A673 (cell line): ENCODE measurements at regions of chr18 and their contacts with region 1.

Region 1: GRCh38 chr18:57881818-57882413 is 78.8 kb upstream of the ATP8B1 start:
- DNase-seq: peak; percentile 87
- H3K4me3 ChIP-seq: no peak overlapping the region
- H3K27ac ChIP-seq: no peak overlapping the region
- H3K4me1 ChIP-seq: no peaks in the 10 kb centered on the region
- H3K27me3 ChIP-seq: no peaks in the 10 kb centered on the region
- CTCF ChIP-seq: peak; percentile 95

Region 2: GRCh38 chr18:57705826-57706554 is 175.9 kb before region 1 on chr18:
- CTCF ChIA-PET with region 1: no interaction called
- POLR2A ChIA-PET with region 1: no interaction called
- intact Hi-C with region 1: no loop called
- DNase-seq: no peak
- H3K4me3 ChIP-seq: no peak overlapping the region
- H3K27ac ChIP-seq: no peak overlapping the region
- H3K4me1 ChIP-seq: peaks cover 10% of the 10 kb centered on the region
- H3K27me3 ChIP-seq: no peaks in the 10 kb centered on the region
- CTCF ChIP-seq: no peak

Region 3: GRCh38 chr18:58117786-58118403 is 236.0 kb after region 1 on chr18:
- CTCF ChIA-PET with region 1: interaction called, 26 read pairs
- POLR2A ChIA-PET with region 1: no interaction called
- intact Hi-C with region 1: loop called (anchors 2 kb)
- DNase-seq: no peak
- H3K4me3 ChIP-seq: no peak overlapping the region
- H3K27ac ChIP-seq: no peak overlapping the region
- H3K4me1 ChIP-seq: no peaks in the 10 kb centered on the region
- H3K27me3 ChIP-seq: no peaks in the 10 kb centered on the region
- CTCF ChIP-seq: no peak

Region 4: DNA sequence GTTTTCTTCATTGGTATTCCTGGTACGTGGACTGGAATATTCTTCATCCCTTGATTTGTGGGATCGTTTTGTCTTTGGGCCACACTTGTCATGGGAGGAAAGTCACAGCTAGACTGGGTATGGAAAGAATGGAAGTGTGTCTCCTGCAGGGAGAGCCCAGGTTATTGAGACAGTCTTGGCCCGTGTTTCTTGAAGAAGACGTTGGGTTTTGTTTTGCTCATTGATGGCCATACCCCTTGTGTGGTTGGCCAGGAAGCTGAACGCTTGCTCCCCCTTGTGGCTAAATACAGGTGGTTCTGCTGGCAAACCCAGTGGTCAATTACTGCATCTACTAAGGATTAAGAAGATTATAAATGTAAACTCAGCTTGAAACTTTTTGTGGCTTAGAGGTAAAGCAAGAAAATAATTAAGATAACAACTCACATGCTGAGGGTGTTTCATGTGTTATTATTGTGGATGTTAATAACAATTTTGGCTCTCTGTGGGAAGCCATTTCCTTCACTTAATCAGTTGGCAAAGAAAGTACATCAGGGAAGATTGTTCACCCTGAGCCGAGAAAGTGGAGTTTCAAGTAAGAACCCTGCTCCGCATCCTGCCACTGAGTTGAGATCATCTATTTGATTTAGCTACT is 253.9 kb after region 1 on chr18:
- CTCF ChIA-PET with region 1: no interaction called
- POLR2A ChIA-PET with region 1: no interaction called
- intact Hi-C with region 1: loop called (anchors 5 kb)
- DNase-seq: peak; percentile 90
- H3K4me3 ChIP-seq: no peak overlapping the region
- H3K27ac ChIP-seq: no peak overlapping the region
- H3K4me1 ChIP-seq: peaks cover 17% of the 10 kb centered on the region
- H3K27me3 ChIP-seq: peaks cover 68% of the 10 kb centered on the region
- CTCF ChIP-seq: peak; percentile 96

Region 5: GRCh38 chr18:58176915-58177717 is 295.2 kb after region 1 on chr18:
- CTCF ChIA-PET with region 1: no interaction called
- POLR2A ChIA-PET with region 1: no interaction called
- intact Hi-C with region 1: loop called (anchors 5 kb)
- DNase-seq: peak; percentile 24
- H3K4me3 ChIP-seq: no peak overlapping the region
- H3K27ac ChIP-seq: no peak overlapping the region
- H3K4me1 ChIP-seq: no peaks in the 10 kb centered on the region
- H3K27me3 ChIP-seq: no peaks in the 10 kb centered on the region
- CTCF ChIP-seq: no peak